ENCODE measurements at regions of chr3 and their contacts with region 1.

Region 1: DNA sequence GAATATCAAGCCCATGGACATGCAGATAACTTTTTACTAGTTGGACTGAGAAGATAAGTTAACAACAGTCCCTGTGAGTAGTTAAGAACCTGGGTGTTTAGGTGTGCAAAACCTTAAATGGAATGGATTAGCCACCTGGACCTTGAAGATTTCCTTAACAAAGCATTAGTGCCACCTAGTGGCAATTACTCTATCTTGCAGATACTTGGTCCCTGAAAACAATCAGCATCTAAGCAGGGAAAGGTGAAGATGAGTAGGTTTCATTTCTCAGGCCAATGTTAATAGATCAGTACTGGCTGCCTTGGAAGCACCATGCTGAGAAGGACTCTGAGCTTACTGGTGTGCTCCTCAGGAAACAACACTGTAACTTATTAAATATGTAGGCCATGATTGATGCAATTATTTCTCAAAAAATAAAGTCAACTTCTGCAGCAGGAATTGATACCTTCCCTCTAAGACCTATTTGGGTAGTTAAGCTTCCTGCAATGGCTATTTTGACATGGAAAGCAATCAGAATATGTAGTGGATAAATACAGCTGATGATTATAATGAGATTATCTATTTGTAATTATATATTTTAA is 329.4 kb downstream of the TBC1D5 start:
- DNase-seq: peak; percentile 20
- CTCF ChIP-seq: peak; percentile 63

Region 2: GRCh38 chr3:16849229-16849628 is 563.8 kb before region 1 on chr3:
- in situ Hi-C with region 1: loop called (anchors 25 kb)
- DNase-seq: peak; percentile 37
- CTCF ChIP-seq: no peak

Measured in GM13976 (cell line).